ENCODE measurements at regions of chr4 and their contacts with region 1.

Region 1: GRCh38 chr4:13830449-13830848 is 202.9 kb upstream of the BOD1L1 start:
- DNase-seq: no peak
- ATAC-seq: no peak
- H3K4me3 ChIP-seq: no peak overlapping the region
- H3K27ac ChIP-seq: no peak overlapping the region
- H3K4me1 ChIP-seq: peaks cover 0 to 19% (median 1%) of the 10 kb centered on the region in 12 donors
- H3K27me3 ChIP-seq: no peaks in the 10 kb centered on the region
- CTCF ChIP-seq: no peak
- POLR2A ChIP-seq: no peak

Region 2: GRCh38 chr4:13705521-13706041 is 124.9 kb before region 1 on chr4:
- intact Hi-C with region 1: loop called in 2 of 10 experiments (anchors 10 kb)
- DNase-seq: peak; percentile 56 to 78 (median 62)
- ATAC-seq: peak; percentile 93 to 96 (median 94)
- H3K4me3 ChIP-seq: peak overlapping the region in 4 of 12 donors; percentile 3 to 24 (median 14)
- H3K27ac ChIP-seq: peak overlapping the region; percentile 65 to 95 (median 80)
- H3K4me1 ChIP-seq: peaks cover 0 to 30% (median 9%) of the 10 kb centered on the region in 12 donors
- H3K27me3 ChIP-seq: no peaks in the 10 kb centered on the region
- CTCF ChIP-seq: no peak
- POLR2A ChIP-seq: no peak